ENCODE measurements at regions of chr4 and their contacts with region 1.

Region 1: GRCh38 chr4:139030614-139031235 is 15.1 kb downstream of the NOCT start:
- DNase-seq: peak; percentile 61
- ATAC-seq: peak; percentile 68
- H3K4me3 ChIP-seq: no peak overlapping the region
- H3K27ac ChIP-seq: no peak overlapping the region
- H3K4me1 ChIP-seq: peaks cover 0 to 4% of the 10 kb centered on the region in 2 experiments; a peak in 1 of 4 replicates
- H3K27me3 ChIP-seq: no peaks in the 10 kb centered on the region
- CTCF ChIP-seq: peak; percentile 61 to 83 (median 77); a peak in 5 of 6 replicates
- POLR2A ChIP-seq: no peak
- RAD21 ChIP-seq: peak; percentile 89

Region 2: GRCh38 chr4:139044291-139044690 is 13.6 kb after region 1 on chr4:
- CTCF ChIA-PET with region 1: interaction called, 10 read pairs
- POLR2A ChIA-PET with region 1: no interaction called
- RAD21 ChIA-PET with region 1: no interaction called
- intact Hi-C with region 1: no loop called
- DNase-seq: no peak
- ATAC-seq: no peak
- H3K4me3 ChIP-seq: no peak overlapping the region
- H3K27ac ChIP-seq: no peak overlapping the region
- H3K4me1 ChIP-seq: no peaks in the 10 kb centered on the region
- H3K27me3 ChIP-seq: no peaks in the 10 kb centered on the region
- CTCF ChIP-seq: no peak
- POLR2A ChIP-seq: no peak
- RAD21 ChIP-seq: no peak

Region 3: GRCh38 chr4:139099366-139099982 is 68.7 kb after region 1 on chr4:
- CTCF ChIA-PET with region 1: interaction called, 5 read pairs
- POLR2A ChIA-PET with region 1: no interaction called
- RAD21 ChIA-PET with region 1: no interaction called
- intact Hi-C with region 1: loop called (anchors 5 kb)
- DNase-seq: peak; percentile 84
- ATAC-seq: peak; percentile 94
- H3K4me3 ChIP-seq: no peak overlapping the region
- H3K27ac ChIP-seq: no peak overlapping the region
- H3K4me1 ChIP-seq: no peaks in the 10 kb centered on the region
- H3K27me3 ChIP-seq: no peaks in the 10 kb centered on the region
- CTCF ChIP-seq: peak; percentile 80 to 88 (median 86)
- POLR2A ChIP-seq: no peak
- RAD21 ChIP-seq: peak; percentile 92

Region 4: DNA sequence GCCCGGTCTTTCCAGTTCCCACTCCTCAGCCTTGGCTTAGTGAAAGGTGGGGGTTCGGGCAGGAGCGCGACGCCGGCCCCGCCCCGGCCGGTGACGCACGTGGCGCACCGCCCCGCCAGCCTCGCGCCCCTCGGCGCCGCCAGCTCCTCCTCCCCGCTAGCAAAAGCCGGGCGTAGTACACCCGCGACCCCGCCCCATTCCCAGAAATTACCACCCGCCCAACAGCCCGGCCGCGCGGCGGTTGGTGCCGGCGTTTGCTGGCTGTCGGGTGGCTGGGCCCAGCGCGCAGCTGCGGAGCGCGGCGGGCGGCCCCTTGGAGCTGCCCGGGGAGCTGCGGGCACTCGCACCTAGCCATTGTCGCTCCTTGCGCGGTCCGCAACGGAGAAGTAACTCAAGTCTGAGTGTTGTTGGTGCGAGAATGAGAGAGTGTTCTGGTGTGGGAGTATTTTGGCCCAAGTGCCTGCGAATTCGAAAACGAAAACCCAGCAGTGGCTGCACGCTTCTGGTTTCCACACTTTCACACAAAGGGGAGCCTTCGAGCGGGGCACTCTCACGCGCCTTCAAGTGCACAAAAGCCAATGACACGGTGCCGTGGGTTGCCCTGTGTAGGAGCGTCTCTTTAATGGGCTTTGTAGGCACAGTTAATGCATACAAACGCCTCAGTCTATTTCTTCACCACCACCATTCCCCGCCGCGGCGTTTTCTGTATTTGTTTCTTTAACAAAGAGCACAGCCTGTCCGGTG is 147.3 kb after region 1 on chr4:
- CTCF ChIA-PET with region 1: interaction called, 14 read pairs
- POLR2A ChIA-PET with region 1: no interaction called
- RAD21 ChIA-PET with region 1: no interaction called
- intact Hi-C with region 1: no loop called
- DNase-seq: peak; percentile 85
- ATAC-seq: peak; percentile 77
- H3K4me3 ChIP-seq: peak overlapping the region; percentile 71 to 96
- H3K27ac ChIP-seq: peak overlapping the region; percentile 72
- H3K4me1 ChIP-seq: peaks cover 0 to 25% of the 10 kb centered on the region in 2 experiments; a peak in 3 of 4 replicates
- H3K27me3 ChIP-seq: no peaks in the 10 kb centered on the region
- CTCF ChIP-seq: no peak
- POLR2A ChIP-seq: peak; percentile 84
- RAD21 ChIP-seq: no peak

Region 5: DNA sequence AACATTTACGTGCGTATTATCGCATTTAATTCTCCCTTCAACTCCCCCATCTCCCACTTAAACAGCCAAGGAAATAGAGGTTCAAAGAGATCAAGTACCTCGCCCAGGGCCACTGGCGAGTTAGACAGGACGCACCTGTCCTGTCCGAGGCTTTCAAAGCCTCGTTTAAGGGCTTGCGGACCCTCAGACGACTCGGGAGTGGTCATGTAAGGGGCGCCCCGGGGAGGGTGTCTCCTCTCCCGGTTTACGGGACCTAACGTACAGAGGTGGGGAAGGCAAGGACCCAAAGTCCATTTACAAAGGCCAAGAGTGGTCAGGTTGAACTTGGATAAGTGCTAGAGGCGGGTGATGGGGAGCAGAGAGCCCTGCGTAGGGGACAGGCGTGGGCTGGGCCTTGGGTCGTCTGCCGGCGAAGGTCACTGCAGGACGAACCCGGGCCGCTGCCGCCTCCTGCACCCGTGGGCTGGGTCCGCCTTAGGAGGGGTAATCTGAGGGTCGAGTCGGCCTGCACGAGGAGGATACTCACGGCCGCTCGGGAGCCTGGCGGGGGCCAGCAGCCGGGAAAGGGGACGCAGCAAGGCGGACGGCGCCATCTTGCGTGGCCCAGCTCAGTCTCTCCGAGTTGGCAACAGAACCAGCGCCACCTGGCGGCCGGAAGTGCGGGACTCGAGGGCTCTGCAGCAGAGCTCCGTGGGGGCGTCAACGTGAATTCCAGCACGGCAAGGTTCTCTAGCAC is 264.6 kb after region 1 on chr4:
- CTCF ChIA-PET with region 1: interaction called, 13 read pairs
- POLR2A ChIA-PET with region 1: no interaction called
- RAD21 ChIA-PET with region 1: interaction called, 4 to 5 read pairs
- intact Hi-C with region 1: loop called (anchors 1 kb)
- DNase-seq: peak; percentile 82
- ATAC-seq: peak; percentile 95
- H3K4me3 ChIP-seq: peak overlapping the region; percentile 89 to 99
- H3K27ac ChIP-seq: peak overlapping the region; percentile 71
- H3K4me1 ChIP-seq: peaks cover 13 to 28% of the 10 kb centered on the region in 2 experiments
- H3K27me3 ChIP-seq: no peaks in the 10 kb centered on the region
- CTCF ChIP-seq: peak in 2 of 3 experiments; percentile 82 to 91; a peak in 4 of 6 replicates
- POLR2A ChIP-seq: peak; percentile 75
- RAD21 ChIP-seq: no peak

Region 6: DNA sequence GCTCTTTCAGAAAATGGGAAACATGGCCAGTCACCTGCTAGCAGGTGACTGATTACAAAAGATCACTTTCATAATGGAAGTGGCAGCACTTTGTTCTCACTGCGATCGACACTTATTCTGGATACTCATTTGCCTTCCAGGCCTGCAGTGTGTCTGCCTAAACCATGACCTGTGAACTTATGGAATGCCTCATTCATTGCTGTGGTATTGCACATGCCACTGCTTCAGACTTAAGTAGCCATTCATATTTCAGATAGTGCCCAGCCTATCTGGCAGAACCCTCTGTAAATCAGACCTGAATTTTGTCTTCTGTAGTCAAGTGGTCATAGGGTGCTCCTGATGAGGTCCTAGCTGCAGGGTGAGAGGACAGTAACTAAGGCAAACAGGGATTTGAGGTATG is 611.6 kb after region 1 on chr4:
- CTCF ChIA-PET with region 1: no interaction called
- POLR2A ChIA-PET with region 1: no interaction called
- RAD21 ChIA-PET with region 1: no interaction called
- intact Hi-C with region 1: loop called (anchors 10 kb)
- DNase-seq: no peak
- ATAC-seq: no peak
- H3K4me3 ChIP-seq: no peak overlapping the region
- H3K27ac ChIP-seq: no peak overlapping the region
- H3K4me1 ChIP-seq: peaks cover 0 to 4% of the 10 kb centered on the region in 2 experiments; a peak in 1 of 4 replicates
- H3K27me3 ChIP-seq: no peaks in the 10 kb centered on the region
- CTCF ChIP-seq: no peak
- POLR2A ChIP-seq: no peak
- RAD21 ChIP-seq: no peak